Left colon (tissue), 2 donors: ENCODE measurements at regions of chr1 and their contacts with region 1.

Region 1: DNA sequence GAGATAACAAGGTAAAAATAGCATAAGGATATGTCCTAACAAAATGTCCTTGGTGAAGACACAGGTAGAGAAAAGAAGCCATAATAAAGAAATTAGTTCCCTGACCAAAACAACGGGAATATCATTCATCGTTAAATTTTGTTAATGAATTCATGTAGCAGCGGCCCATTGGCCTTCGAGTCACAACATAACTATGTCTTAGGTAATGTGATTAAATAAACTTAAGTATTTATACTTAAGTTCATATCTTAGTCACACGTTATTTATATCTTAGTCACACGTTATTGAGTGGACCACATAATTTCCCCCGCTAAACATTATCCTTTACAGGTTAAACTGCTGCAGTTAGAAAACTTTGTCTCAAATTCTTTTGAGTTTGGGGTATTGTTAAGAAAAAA is 1.2 kb downstream of the NEXN start:
- DNase-seq: no peak
- ATAC-seq: no peak

Region 2: GRCh38 chr1:77832901-77833300 is 56.8 kb before region 1 on chr1:
- intact Hi-C with region 1: loop called in 1 of 2 experiments (anchors 5 kb)
- DNase-seq: no peak
- ATAC-seq: no peak